ENCODE measurements at regions of chr19 and their contacts with region 1.

Region 1: DNA sequence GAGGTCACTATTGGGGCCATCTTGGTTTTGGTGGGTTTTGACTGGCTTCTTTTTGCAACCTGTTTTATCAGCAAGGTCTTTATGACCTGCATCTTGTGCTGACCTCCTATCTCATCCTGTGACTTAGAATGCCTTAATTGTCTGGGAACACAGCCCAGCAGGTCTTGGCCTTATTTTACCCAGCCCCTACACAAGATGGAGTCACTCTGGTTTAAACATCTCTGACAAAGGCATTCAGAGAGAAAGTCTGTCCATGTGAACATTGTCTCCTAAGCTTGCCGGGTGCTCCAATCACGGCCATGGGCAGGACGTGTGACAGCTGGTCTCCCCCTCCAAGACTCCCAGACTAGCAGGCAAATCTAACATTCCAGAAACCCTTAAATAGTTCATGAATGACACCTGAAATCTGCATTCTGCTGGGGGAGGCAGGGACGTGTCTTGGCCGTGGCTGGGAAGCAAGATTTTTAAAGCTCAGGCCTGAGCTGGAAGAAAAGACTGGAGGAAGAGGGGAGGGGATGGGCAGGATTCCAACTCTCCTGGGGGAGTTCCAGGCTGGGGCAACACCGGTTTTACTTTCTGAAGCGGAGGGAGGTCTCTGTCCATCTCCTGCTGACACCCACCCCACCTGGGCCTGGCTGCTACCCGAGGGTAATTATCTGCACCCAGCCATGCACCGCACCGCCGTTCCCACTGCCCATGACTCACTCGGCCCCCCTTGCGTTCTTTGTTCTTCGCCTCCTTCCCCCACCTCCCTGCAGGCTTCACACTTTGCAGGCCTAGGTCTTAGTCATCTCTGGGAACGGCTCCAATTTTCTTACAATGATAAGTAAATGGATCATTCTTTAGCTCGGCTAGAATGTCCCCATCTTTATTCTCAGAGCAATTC is 11.6 kb upstream of the OR1M1 start:
- DNase-seq: peak; percentile 78
- ATAC-seq: peak; percentile 95
- H3K4me3 ChIP-seq: no peak overlapping the region
- H3K27ac ChIP-seq: peak overlapping the region; percentile 95
- H3K4me1 ChIP-seq: peaks cover 31% of the 10 kb centered on the region
- H3K27me3 ChIP-seq: no peaks in the 10 kb centered on the region
- CTCF ChIP-seq: no peak

Region 2: DNA sequence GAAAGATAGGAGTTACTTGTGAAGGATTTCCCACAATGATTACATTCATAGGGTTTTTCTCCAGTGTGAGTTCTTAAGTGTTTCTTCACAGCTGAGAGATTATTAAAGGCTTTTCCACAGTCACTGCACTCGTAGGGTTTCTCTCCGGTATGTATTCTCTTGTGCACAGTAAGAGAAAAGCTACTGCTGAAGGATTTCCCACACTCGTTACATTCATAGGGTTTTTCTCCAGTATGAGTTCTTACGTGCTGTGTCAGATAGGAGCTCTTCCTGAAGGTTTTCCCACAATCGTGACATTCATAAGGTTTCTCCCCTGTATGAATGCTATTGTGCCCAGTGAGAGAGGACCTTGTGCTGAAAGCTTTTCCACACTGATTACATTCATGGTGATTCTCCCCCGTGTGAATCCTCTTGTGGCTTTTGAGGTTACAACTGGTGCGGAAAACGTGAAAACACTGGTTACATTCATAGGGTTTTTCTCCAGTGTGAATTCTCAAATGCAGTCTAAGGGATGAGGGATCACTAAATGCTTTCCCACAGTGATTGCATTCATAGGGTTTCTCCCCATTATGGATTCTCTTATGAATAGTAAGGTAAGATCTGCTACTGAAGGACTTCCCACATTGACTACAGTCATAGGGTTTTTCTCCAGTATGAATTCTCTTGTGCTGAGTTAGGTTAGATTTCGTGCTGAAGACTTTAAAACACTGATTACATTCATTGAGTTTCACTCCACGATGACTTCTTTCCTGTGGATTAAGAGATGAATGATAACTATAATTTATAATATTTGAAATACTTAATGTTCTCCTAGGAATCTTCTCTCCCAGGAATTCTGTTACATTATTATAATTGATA is 263.8 kb before region 1 on chr19:
- CTCF ChIA-PET with region 1: no interaction called
- POLR2A ChIA-PET with region 1: no interaction called
- in situ Hi-C with region 1: no loop called
- intact Hi-C with region 1: loop called (anchors 10 kb)
- DNase-seq: no peak
- ATAC-seq: no peak
- H3K4me3 ChIP-seq: no peak overlapping the region
- H3K27ac ChIP-seq: no peak overlapping the region
- H3K4me1 ChIP-seq: no peaks in the 10 kb centered on the region
- H3K27me3 ChIP-seq: no peaks in the 10 kb centered on the region
- CTCF ChIP-seq: no peak

Region 3: GRCh38 chr19:9060564-9061340 is 14.6 kb before region 1 on chr19:
- CTCF ChIA-PET with region 1: no interaction called
- POLR2A ChIA-PET with region 1: no interaction called
- in situ Hi-C with region 1: no loop called
- intact Hi-C with region 1: no loop called
- DNase-seq: no peak
- ATAC-seq: peak; percentile 64
- H3K4me3 ChIP-seq: no peak overlapping the region
- H3K27ac ChIP-seq: peak overlapping the region; percentile 72
- H3K4me1 ChIP-seq: peaks cover 8% of the 10 kb centered on the region
- H3K27me3 ChIP-seq: no peaks in the 10 kb centered on the region
- CTCF ChIP-seq: no peak

Region 4: DNA sequence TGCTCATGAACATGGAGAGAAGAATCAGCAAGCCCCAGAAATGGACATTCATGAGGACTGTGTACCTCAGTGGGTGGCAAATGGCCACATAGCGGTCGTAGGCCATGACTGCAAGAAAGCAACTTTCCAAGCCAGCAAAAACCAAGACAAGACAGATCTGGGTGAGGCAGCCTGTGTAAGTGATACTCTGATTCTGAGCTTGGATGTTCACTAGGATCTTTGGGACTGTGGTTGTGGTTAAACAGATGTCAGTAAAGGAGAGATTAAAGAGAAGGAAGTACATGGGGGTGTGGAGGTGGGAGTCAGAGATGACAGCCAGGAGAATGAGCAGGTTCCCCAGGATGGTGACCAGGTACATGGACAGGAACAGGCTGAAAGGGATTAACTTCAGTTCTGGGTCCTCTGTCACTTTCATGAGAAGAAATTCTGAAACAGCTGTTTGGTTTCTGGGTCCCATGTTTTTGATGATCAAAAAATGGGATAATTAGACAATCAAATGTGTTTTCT is 40.1 kb after region 1 on chr19 and contains the start of gene OR7G1:
- CTCF ChIA-PET with region 1: no interaction called
- POLR2A ChIA-PET with region 1: no interaction called
- in situ Hi-C with region 1: no loop called
- intact Hi-C with region 1: no loop called
- DNase-seq: no peak
- ATAC-seq: no peak
- H3K4me3 ChIP-seq: no peak within 1 kb of the TSS
- H3K27ac ChIP-seq: no peak within 1 kb of the TSS
- H3K4me1 ChIP-seq: no peaks in the 10 kb centered on the region
- H3K27me3 ChIP-seq: no peaks in the 10 kb centered on the region
- CTCF ChIP-seq: no peak
- total RNA-seq, gene OR7G1: not detected

Measured in Panc1 (cell line).